Activated naive CD4-positive, alpha-beta T cell treated with anti-CD3 and anti-CD28 coated beads, Interleukin-2, amount 10 ng/mL, durations not matched to agents 7 days and 5 days (primary cell): ENCODE measurements at regions of chr17 and their contacts with region 1.

Region 1: DNA sequence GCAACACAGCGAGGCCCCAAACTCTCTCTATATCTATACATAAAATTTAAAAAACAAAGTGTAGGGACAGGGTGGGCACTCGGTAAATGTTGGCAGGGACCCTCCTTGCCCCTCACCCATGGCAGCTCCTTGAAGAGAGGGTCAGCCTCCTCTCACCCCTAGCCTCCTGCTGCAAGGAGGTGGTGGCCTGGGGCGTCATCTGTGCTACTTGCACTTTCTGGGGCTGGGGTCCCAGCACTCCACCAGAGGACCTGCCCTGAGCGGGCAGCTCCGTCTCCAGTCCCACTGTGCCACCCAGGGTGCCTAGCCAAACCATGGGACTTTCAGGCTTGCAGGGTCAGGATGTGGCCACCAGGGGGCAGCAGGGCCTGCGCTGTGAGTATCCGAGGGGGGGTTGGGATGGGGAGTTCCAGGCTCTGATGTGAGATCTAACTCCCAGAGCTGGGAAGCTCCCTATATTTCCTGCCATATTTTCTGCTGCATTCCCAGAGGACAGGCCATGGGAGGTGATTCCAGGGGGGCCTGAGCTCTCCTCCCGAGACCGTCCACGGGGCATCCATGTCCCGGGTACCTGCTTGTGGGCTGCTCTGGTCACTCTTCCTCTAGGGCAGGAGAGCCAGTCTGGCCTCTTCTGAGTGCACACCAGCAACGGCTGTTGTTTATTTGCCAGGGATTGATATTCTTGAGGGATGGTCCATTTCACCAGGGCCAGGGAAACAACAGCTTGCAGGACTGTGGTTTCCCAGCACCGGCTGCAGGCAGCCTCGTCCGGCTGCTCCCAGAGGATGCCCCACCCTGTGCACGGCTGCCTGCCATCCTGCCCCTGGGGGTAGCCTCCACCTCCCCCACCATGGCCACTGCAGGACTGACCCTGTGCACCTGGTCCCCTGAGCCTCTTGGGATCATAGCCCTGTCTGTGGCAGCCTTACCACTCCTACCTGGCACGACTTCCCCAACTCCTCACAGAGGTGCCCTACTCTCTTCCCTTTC is 1.1 kb downstream of the GPR142 start:
- DNase-seq: peak; percentile 79
- H3K4me3 Mint-ChIP-seq: no peak overlapping the region
- H3K27ac Mint-ChIP-seq: no peak overlapping the region
- H3K4me1 Mint-ChIP-seq: peaks cover 15% of the 10 kb centered on the region
- H3K27me3 Mint-ChIP-seq: peaks cover 45% of the 10 kb centered on the region

Region 2: DNA sequence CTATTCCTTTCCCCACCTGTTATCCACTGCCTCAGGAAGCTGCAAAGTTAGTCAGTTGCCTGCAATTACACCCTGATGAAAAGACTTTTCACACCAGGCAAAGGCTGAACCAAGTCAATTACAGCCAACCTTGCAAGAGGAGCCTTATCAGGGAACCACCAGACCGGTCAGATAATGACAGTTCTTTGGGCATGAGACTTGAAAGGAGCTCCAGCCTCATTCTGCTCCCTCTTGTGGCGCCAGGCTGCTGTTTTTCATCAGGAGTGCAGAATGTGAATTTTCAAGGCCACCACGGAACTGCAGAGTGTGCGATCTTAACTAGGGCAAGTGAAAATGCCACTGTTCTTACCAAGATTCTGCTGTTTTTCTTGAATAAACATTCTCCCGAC is 71.8 kb before region 1 on chr17:
- CTCF ChIA-PET with region 1: interaction called, 11 read pairs
- DNase-seq: peak; percentile 71
- H3K4me3 Mint-ChIP-seq: no peak overlapping the region
- H3K27ac Mint-ChIP-seq: no peak overlapping the region
- H3K4me1 Mint-ChIP-seq: peaks cover 23% of the 10 kb centered on the region
- H3K27me3 Mint-ChIP-seq: peaks cover 42% of the 10 kb centered on the region

Region 3: GRCh38 chr17:74354123-74354522 is 14.3 kb before region 1 on chr17:
- CTCF ChIA-PET with region 1: interaction called, 16 read pairs
- DNase-seq: peak; percentile 79
- H3K4me3 Mint-ChIP-seq: no peak overlapping the region
- H3K27ac Mint-ChIP-seq: no peak overlapping the region
- H3K4me1 Mint-ChIP-seq: peaks cover 10% of the 10 kb centered on the region
- H3K27me3 Mint-ChIP-seq: peaks cover 99% of the 10 kb centered on the region

Region 4: GRCh38 chr17:74457146-74457819 is 88.9 kb after region 1 on chr17:
- CTCF ChIA-PET with region 1: interaction called, 82 read pairs
- DNase-seq: peak; percentile 76
- H3K4me3 Mint-ChIP-seq: no peak overlapping the region
- H3K27ac Mint-ChIP-seq: peak overlapping the region; percentile 73
- H3K4me1 Mint-ChIP-seq: peaks cover 47% of the 10 kb centered on the region
- H3K27me3 Mint-ChIP-seq: peaks cover 77% of the 10 kb centered on the region

Region 5: GRCh38 chr17:74532115-74532514 is 163.7 kb after region 1 on chr17:
- CTCF ChIA-PET with region 1: interaction called, 29 read pairs
- DNase-seq: no peak
- H3K4me3 Mint-ChIP-seq: no peak overlapping the region
- H3K27ac Mint-ChIP-seq: no peak overlapping the region
- H3K4me1 Mint-ChIP-seq: peaks cover 2% of the 10 kb centered on the region
- H3K27me3 Mint-ChIP-seq: peaks cover 76% of the 10 kb centered on the region